CD8-positive, alpha-beta T cell (primary cell): ENCODE measurements at regions of chr12 and their contacts with region 1.

Region 1: GRCh38 chr12:1093166-1093751 is 102.2 kb downstream of the ERC1 start:
- DNase-seq: peak in 4 of 9 experiments; percentile 15 to 68 (median 48)
- ATAC-seq: peak; percentile 75
- H3K4me3 ChIP-seq: no peak overlapping the region
- H3K4me3 Mint-ChIP-seq: no peak overlapping the region
- H3K27ac ChIP-seq: no peak overlapping the region
- H3K27ac Mint-ChIP-seq: no peak overlapping the region
- H3K4me1 ChIP-seq: no peaks in the 10 kb centered on the region
- H3K4me1 Mint-ChIP-seq: peaks cover 22% of the 10 kb centered on the region
- H3K27me3 ChIP-seq: no peaks in the 10 kb centered on the region
- H3K27me3 Mint-ChIP-seq: no peaks in the 10 kb centered on the region
- CTCF ChIP-seq: peak; percentile 76

Region 2: GRCh38 chr12:569803-570434 is 523.3 kb before region 1 on chr12:
- CTCF ChIA-PET with region 1: interaction called, 3 read pairs
- POLR2A ChIA-PET with region 1: no interaction called
- intact Hi-C with region 1: loop called (anchors 5 kb)
- DNase-seq: peak; percentile 74 to 93 (median 87)
- ATAC-seq: peak; percentile 98
- H3K4me3 ChIP-seq: peak overlapping the region; percentile 63 to 76
- H3K4me3 Mint-ChIP-seq: peak overlapping the region; percentile 86
- H3K27ac ChIP-seq: peak overlapping the region in 1 of 2 experiments; percentile 8
- H3K27ac Mint-ChIP-seq: peak overlapping the region; percentile 77
- H3K4me1 ChIP-seq: peaks cover 43% of the 10 kb centered on the region
- H3K4me1 Mint-ChIP-seq: peaks cover 45% of the 10 kb centered on the region
- H3K27me3 ChIP-seq: no peaks in the 10 kb centered on the region
- H3K27me3 Mint-ChIP-seq: no peaks in the 10 kb centered on the region
- CTCF ChIP-seq: peak; percentile 88

Region 3: DNA sequence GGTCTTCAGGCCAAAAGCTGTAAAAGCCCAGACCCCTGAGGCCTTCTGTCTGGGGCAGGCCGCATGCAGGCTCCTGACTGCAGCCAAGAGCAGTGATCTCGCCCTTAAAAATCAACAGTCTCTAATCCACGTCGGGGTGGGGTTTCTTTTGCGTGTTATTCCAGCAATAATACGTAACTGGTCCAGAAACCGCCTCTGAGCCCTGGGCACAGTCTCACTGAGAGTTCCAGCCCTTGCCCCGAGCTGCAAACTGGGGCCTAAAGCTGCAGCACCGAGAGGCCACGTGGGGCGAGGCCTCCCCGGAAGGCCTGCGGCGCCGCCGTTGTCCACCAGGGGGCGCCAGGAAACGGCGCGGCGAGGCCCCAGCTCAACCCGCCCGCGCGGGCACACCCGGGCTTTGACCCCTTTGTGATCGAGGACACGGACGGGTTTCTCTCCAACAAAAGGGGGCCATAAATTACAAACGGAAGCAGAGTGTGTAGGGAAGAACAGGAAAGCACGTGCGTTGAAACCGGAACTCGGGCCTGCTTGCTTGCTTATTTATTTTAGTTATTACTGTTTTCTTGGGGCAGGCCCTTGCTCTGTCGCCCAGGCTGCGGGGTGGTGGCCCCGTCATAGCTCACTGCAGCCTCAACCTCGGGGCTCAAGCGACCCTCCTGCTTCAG is 517.2 kb before region 1 on chr12:
- CTCF ChIA-PET with region 1: no interaction called
- POLR2A ChIA-PET with region 1: no interaction called
- intact Hi-C with region 1: loop called in 1 of 2 experiments (anchors 5 kb)
- DNase-seq: peak; percentile 73 to 95 (median 81)
- ATAC-seq: peak; percentile 98
- H3K4me3 ChIP-seq: peak overlapping the region; percentile 25 to 34
- H3K4me3 Mint-ChIP-seq: peak overlapping the region; percentile 69
- H3K27ac ChIP-seq: no peak overlapping the region
- H3K27ac Mint-ChIP-seq: peak overlapping the region; percentile 37
- H3K4me1 ChIP-seq: peaks cover 4% of the 10 kb centered on the region
- H3K4me1 Mint-ChIP-seq: peaks cover 14% of the 10 kb centered on the region
- H3K27me3 ChIP-seq: no peaks in the 10 kb centered on the region
- H3K27me3 Mint-ChIP-seq: no peaks in the 10 kb centered on the region
- CTCF ChIP-seq: peak; percentile 98

Region 4: GRCh38 chr12:823028-823698 is 270.1 kb before region 1 on chr12:
- CTCF ChIA-PET with region 1: no interaction called
- POLR2A ChIA-PET with region 1: no interaction called
- intact Hi-C with region 1: loop called (anchors 5 kb)
- DNase-seq: no peak
- ATAC-seq: no peak
- H3K4me3 ChIP-seq: no peak overlapping the region
- H3K4me3 Mint-ChIP-seq: no peak overlapping the region
- H3K27ac ChIP-seq: no peak overlapping the region
- H3K27ac Mint-ChIP-seq: peak overlapping the region; percentile 1
- H3K4me1 ChIP-seq: no peaks in the 10 kb centered on the region
- H3K4me1 Mint-ChIP-seq: peaks cover 62% of the 10 kb centered on the region
- H3K27me3 ChIP-seq: no peaks in the 10 kb centered on the region
- H3K27me3 Mint-ChIP-seq: no peaks in the 10 kb centered on the region
- CTCF ChIP-seq: no peak

Region 5: DNA sequence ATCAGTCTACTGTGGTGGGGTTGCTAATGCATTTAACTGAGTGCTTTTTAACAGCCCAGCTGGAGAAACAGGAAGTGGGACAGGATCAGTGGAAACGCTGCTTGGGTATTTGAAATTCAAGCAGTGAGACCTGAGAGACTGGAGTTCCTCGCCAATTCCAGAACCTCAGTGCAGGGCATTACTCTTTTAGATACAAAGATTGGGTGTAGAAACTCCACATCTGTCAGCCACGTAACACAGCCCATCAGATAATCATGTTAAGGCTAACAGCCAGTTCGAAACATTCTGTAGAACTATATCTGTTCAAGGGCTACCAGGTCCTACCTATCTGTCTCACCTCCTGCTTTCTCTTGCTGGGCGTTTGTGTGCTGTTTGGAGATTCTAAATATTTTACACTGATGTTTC is 189.2 kb before region 1 on chr12:
- CTCF ChIA-PET with region 1: interaction called, 3 read pairs
- POLR2A ChIA-PET with region 1: no interaction called
- intact Hi-C with region 1: loop called in 1 of 2 experiments (anchors 5 kb)
- DNase-seq: no peak
- ATAC-seq: no peak
- H3K4me3 ChIP-seq: no peak overlapping the region
- H3K4me3 Mint-ChIP-seq: no peak overlapping the region
- H3K27ac ChIP-seq: no peak overlapping the region
- H3K27ac Mint-ChIP-seq: peak overlapping the region; percentile 78
- H3K4me1 ChIP-seq: peaks cover 18% of the 10 kb centered on the region
- H3K4me1 Mint-ChIP-seq: peaks cover 37% of the 10 kb centered on the region
- H3K27me3 ChIP-seq: no peaks in the 10 kb centered on the region
- H3K27me3 Mint-ChIP-seq: no peaks in the 10 kb centered on the region
- CTCF ChIP-seq: no peak

Region 6: GRCh38 chr12:990661-991349 is 102.5 kb before region 1 on chr12 and contains the start of gene ERC1:
- CTCF ChIA-PET with region 1: interaction called, 6 read pairs
- POLR2A ChIA-PET with region 1: no interaction called
- intact Hi-C with region 1: loop called in 1 of 2 experiments (anchors 10 kb)
- DNase-seq: peak; percentile 71 to 92 (median 80)
- ATAC-seq: peak; percentile 83
- H3K4me3 ChIP-seq: peak within 1 kb of the TSS; percentile 68 to 98
- H3K4me3 Mint-ChIP-seq: peak within 1 kb of the TSS; percentile 94
- H3K27ac ChIP-seq: peak within 1 kb of the TSS; percentile 78 to 82
- H3K27ac Mint-ChIP-seq: peak within 1 kb of the TSS; percentile 95
- H3K4me1 ChIP-seq: peaks cover 27% of the 10 kb centered on the region
- H3K4me1 Mint-ChIP-seq: peaks cover 50% of the 10 kb centered on the region
- H3K27me3 ChIP-seq: no peaks in the 10 kb centered on the region
- H3K27me3 Mint-ChIP-seq: no peaks in the 10 kb centered on the region
- CTCF ChIP-seq: no peak
- total RNA-seq, gene ERC1: 34.5 to 34.6 TPM